ENCODE measurements at regions of chr4 and their contacts with region 1.

Region 1: DNA sequence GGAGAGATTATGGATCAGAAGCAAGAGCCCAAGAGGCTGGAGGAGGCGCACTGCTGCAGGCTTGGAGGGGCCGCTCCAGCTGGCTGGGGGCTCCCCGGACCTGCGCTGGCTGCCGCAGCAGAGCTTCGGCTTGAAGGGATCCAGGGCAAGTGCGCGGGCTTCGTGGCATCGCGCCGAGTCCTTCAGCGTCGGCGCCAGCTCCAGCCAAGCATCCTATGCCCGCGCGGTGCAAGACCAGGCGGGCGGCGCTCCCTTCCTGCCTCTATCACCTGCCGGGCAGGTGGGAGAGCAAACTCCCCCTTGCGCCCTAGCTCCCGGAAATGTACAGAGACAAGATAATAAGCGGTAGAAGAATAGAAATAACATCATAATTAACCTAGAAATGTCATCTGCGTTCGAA is 10.5 kb upstream of the UCP1 start:
- DNase-seq: peak; percentile 70
- H3K4me3 ChIP-seq: peak overlapping the region in 1 of 2 experiments; percentile 19; a peak in 1 of 4 replicates
- H3K27ac ChIP-seq: no peak overlapping the region
- H3K4me1 ChIP-seq: peaks cover 0 to 4% of the 10 kb centered on the region in 2 experiments; a peak in 1 of 4 replicates
- H3K27me3 ChIP-seq: peaks cover 34% of the 10 kb centered on the region; the same call in 1 of the 2 replicates
- CTCF ChIP-seq: no peak
- EP300 ChIP-seq: no peak
- RAD21 ChIP-seq: no peak

Region 2: DNA sequence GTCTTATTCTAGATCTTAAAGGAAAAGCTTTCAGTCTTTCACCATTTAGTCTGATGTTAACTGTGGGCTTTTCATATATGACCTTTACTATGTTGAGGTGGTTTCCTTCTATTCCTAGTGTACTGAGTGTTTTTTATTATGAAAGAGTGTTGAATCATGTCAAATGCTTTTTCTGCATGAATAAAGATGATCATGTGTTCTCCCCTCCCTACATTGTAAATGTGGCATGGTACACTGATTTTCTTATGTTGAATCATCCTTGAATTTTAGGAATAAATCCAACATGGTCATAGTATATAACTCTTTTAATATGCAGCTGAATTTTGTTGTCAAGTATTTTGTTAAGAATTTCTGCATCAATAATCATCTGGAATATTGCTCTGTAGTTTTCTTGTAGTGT is 156.2 kb before region 1 on chr4:
- CTCF ChIA-PET with region 1: no interaction called
- POLR2A ChIA-PET with region 1: no interaction called
- DNase-seq: no peak
- H3K4me3 ChIP-seq: no peak overlapping the region
- H3K27ac ChIP-seq: no peak overlapping the region
- H3K4me1 ChIP-seq: no peaks in the 10 kb centered on the region; a peak in 1 of 4 replicates
- H3K27me3 ChIP-seq: peaks cover 4% of the 10 kb centered on the region; the same call in 1 of the 2 replicates
- CTCF ChIP-seq: no peak
- EP300 ChIP-seq: no peak
- RAD21 ChIP-seq: no peak

Region 3: GRCh38 chr4:140568507-140569306 is 10.6 kb before region 1 on chr4 and contains the start of gene UCP1:
- CTCF ChIA-PET with region 1: interaction called, 10 read pairs
- POLR2A ChIA-PET with region 1: no interaction called
- DNase-seq: peak; percentile 85
- H3K4me3 ChIP-seq: peak within 1 kb of the TSS; percentile 57 to 60
- H3K27ac ChIP-seq: no peak within 1 kb of the TSS
- H3K4me1 ChIP-seq: peaks cover 0 to 7% of the 10 kb centered on the region in 2 experiments; a peak in 1 of 4 replicates
- H3K27me3 ChIP-seq: peaks cover 38% of the 10 kb centered on the region
- CTCF ChIP-seq: no peak
- EP300 ChIP-seq: no peak
- RAD21 ChIP-seq: no peak
- polyA plus RNA-seq, gene UCP1: not detected in 2 replicates

Region 4: DNA sequence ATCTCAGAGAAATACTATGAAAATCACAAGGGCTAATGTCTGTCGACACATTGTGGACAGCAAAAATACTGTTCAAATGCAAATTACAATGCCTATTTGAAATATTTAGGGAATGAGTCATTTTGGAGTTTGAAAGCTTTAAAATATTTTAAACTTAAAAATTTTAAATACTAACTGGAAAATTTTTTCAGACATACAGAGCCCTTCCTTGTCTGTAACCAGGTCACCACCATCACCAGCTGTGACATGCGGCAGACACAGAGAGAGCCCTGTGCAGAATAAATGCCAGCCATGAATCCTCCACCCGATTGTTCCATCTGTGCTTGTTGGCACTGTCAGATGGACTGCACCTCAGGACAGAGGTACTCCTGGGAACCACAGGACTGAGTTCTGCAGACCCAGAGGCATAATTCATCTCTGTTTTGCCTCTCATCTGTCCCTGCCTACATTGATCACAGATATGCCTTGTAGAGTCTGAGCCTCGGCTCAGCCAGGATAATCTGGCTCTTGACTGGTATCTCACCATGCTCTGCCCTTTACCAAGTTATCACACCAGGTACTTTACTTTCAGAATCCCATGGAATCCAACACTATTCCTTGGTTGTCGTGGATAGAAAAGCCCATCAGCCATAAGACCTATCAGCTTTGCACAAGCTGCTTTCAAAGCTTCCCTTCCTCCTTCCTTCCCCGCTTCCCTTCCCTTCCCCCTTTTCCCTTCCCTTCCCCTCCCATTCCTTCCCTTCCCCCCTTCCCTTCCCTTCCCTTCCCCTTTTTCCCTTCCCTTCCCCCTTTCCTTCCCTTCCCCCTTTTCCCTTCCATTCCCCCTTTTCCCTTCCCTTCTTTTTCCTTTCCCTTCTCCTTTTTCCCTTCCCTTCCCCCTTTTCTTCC is 109.7 kb after region 1 on chr4:
- CTCF ChIA-PET with region 1: no interaction called
- POLR2A ChIA-PET with region 1: no interaction called
- DNase-seq: peak; percentile 59
- H3K4me3 ChIP-seq: no peak overlapping the region
- H3K27ac ChIP-seq: peak overlapping the region; percentile 0 to 81; a peak in 2 of 4 replicates
- H3K4me1 ChIP-seq: peaks cover 9 to 22% of the 10 kb centered on the region in 2 experiments; a peak in 3 of 4 replicates
- H3K27me3 ChIP-seq: no peaks in the 10 kb centered on the region
- CTCF ChIP-seq: no peak
- EP300 ChIP-seq: peak in 1 of 2 experiments; percentile 78; a peak in 2 of 4 replicates
- RAD21 ChIP-seq: peak; percentile 7; the same call in 1 of the 2 replicates

Measured in SK-N-SH (cell line).